Ovary (tissue), 10 donors: ENCODE measurements at regions of chr2 and their contacts with region 1.

Region 1: GRCh38 chr2:11477994-11478393 is 12.0 kb upstream of the E2F6 start:
- DNase-seq: peak; percentile 88 to 97 (median 92)
- H3K4me3 ChIP-seq: no peak overlapping the region
- H3K27ac ChIP-seq: peak overlapping the region in 1 of 2 donors; percentile 41
- H3K4me1 ChIP-seq: peaks cover 3% of the 10 kb centered on the region
- H3K27me3 ChIP-seq: no peaks in the 10 kb centered on the region
- CTCF ChIP-seq: peak; percentile 90 to 95 (median 94)
- EP300 ChIP-seq: no peak
- POLR2A ChIP-seq: no peak

Region 2: DNA sequence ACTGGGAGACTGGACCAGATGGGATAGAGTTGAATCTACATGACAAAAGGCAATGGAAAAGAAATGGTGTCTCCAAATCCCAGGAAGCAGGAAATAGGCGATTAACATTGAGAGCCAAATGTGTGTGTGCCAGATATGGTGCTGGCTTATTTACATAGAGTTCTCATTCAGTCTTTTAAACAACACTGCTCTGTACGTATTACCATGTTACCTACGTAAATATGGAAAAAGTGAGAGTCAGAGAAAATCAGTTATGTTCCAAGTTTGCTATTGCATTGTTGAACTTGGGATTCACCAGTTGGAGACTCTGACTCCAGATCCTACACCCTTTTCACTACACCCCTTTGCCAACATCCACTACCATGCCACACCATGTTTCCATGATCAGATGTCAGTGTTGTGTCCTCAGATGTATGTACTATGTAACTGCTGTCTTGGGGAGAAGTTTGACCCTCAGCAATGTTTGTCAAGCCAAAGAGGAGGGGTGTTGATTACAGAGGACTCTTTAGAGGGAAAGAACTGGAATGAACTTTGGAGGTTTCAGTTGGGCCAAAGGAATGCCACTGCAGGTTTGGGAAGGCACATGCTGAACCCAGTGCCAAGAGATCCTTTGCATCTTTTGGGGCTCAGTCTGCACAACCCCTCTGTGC is 36.2 kb after region 1 on chr2:
- intact Hi-C with region 1: loop called in 1 of 4 experiments (anchors 5 kb)
- DNase-seq: no peak
- H3K4me3 ChIP-seq: no peak overlapping the region
- H3K27ac ChIP-seq: peak overlapping the region; percentile 33 to 63
- H3K4me1 ChIP-seq: peaks cover 29% of the 10 kb centered on the region
- H3K27me3 ChIP-seq: no peaks in the 10 kb centered on the region
- CTCF ChIP-seq: no peak
- EP300 ChIP-seq: no peak
- POLR2A ChIP-seq: no peak

Region 3: DNA sequence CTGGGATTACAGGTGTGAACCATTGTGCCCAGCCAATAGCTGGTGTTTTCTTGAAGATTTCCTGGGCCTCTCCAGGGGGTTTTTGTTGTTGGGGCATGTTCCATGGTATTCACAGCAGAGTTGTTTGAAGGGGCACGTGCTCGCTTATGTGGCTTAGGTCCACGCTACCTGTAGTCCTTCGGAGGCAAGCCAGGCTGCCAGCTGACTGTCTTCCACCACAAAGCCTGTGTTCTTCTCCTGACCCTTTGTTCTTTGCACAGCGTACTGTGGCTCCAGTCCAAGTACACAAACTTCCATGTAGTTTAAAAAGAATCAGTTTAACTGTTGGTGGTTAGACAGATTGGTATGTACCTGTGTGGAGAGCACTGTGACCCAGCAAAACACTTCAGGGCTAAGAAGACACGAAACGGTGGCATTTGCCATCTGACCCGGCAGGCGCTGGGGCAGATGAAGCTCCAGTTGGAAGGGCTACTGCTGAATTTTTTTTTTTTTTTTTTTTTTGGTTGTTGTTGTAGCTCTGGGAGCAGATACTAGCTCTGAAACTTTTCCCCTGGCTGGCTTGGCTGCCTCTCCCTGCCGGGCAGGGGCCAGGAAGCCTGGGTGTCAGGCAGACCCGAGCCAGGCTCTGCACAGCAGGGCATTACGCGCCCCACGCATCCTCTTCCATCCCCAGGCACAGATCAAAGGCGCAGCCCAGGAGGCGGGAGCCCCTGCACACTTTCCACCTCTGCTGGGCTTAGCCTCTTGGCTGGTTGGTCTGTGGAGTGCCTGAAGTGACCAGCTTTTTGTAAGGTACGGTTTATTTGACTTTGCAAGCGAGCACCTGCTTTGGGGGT is 61.5 kb after region 1 on chr2:
- intact Hi-C with region 1: loop called in 2 of 4 experiments (anchors 5 kb)
- DNase-seq: peak; percentile 75 to 90 (median 80)
- H3K4me3 ChIP-seq: peak overlapping the region; percentile 38
- H3K27ac ChIP-seq: peak overlapping the region; percentile 68 to 87
- H3K4me1 ChIP-seq: peaks cover 12% of the 10 kb centered on the region
- H3K27me3 ChIP-seq: no peaks in the 10 kb centered on the region
- CTCF ChIP-seq: no peak
- EP300 ChIP-seq: no peak
- POLR2A ChIP-seq: no peak

Region 4: DNA sequence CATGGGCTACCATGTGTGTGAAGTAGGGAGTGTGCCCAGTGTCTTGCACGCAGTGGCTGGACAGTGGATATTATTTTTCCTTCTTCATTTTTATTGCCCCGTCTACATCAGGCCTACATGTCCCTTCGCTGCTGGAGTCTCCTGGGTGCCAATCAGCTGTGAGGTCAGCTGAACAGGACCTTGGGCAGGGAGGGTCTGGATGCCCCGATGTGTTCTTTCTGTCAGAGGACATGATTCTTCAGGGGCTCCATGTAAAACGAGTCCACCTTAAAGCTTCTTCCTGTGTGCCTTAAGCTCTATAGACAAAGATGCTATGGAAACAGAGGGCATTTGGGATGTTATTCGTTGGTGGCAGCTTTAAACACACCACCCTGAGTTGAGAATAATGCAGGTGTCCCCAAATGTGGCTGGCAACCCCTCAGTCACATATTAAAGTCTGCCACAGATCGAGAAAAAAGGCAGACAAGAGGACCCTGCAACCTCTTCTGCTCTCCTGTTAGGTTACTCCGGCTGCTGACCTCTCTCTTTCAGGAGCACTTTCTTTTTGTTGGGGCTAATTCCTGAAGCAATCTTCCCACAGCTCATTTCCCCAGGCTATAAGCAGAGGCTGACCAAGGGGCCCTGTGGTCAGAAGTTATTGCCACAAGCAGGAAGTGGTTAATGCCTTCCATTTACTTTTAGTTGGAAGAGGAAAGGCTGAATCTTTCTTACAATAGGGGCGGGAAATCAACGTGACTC is 75.8 kb after region 1 on chr2:
- intact Hi-C with region 1: loop called in 1 of 4 experiments (anchors 10 kb)
- DNase-seq: peak; percentile 12 to 39 (median 27)
- H3K4me3 ChIP-seq: no peak overlapping the region
- H3K27ac ChIP-seq: peak overlapping the region; percentile 23 to 92
- H3K4me1 ChIP-seq: peaks cover 22% of the 10 kb centered on the region
- H3K27me3 ChIP-seq: no peaks in the 10 kb centered on the region
- CTCF ChIP-seq: no peak
- EP300 ChIP-seq: no peak
- POLR2A ChIP-seq: no peak

Region 5: GRCh38 chr2:11583840-11584524 is 106.0 kb after region 1 on chr2:
- intact Hi-C with region 1: loop called (anchors 2 to 5 kb)
- DNase-seq: peak; percentile 82 to 92 (median 85)
- H3K4me3 ChIP-seq: no peak overlapping the region
- H3K27ac ChIP-seq: peak overlapping the region; percentile 68 to 74
- H3K4me1 ChIP-seq: peaks cover 19% of the 10 kb centered on the region
- H3K27me3 ChIP-seq: no peaks in the 10 kb centered on the region
- CTCF ChIP-seq: peak; percentile 78 to 94 (median 94)
- EP300 ChIP-seq: no peak
- POLR2A ChIP-seq: no peak

Region 6: GRCh38 chr2:11681722-11682589 is 204.0 kb after region 1 on chr2:
- intact Hi-C with region 1: loop called in 1 of 4 experiments (anchors 5 kb)
- DNase-seq: peak; percentile 68 to 83 (median 69)
- H3K4me3 ChIP-seq: no peak overlapping the region
- H3K27ac ChIP-seq: peak overlapping the region; percentile 67 to 74
- H3K4me1 ChIP-seq: peaks cover 27% of the 10 kb centered on the region
- H3K27me3 ChIP-seq: no peaks in the 10 kb centered on the region
- CTCF ChIP-seq: peak; percentile 54 to 79 (median 62)
- EP300 ChIP-seq: no peak
- POLR2A ChIP-seq: no peak

Region 7: GRCh38 chr2:11778923-11779757 is 301.1 kb after region 1 on chr2:
- intact Hi-C with region 1: loop called in 1 of 4 experiments (anchors 10 kb)
- DNase-seq: peak; percentile 80 to 90 (median 88)
- H3K4me3 ChIP-seq: no peak overlapping the region
- H3K27ac ChIP-seq: no peak overlapping the region
- H3K4me1 ChIP-seq: no peaks in the 10 kb centered on the region
- H3K27me3 ChIP-seq: no peaks in the 10 kb centered on the region
- CTCF ChIP-seq: peak; percentile 89 to 98 (median 97)
- EP300 ChIP-seq: no peak
- POLR2A ChIP-seq: no peak